AG04449 (cell line): ENCODE measurements at regions of chr16 and their contacts with region 1.

Region 1: DNA sequence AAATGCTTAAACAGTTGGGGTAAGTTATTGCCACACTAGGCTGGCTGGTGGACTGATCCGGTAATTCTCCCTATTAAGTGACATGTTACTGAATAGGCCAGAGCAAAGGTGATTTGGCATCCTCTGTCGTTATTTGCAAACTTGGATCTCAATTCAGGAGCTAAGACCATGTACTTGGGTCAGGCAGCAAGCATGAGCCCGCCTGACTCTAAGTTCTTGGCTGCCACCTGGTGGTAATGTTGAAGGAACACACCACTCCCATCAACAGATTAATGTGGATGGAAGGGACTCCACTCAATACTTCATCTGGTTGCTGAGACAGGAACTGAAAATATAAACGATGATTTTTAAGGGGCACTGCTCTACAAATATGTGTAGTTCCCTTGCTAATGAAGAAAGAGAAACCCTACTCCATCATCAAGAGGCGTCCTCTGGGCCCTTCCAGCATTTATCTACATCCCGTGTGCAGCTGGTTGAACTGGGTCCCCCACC is 70.8 kb downstream of the EMP2 start:
- DNase-seq: peak; percentile 42
- H3K4me3 ChIP-seq: no peak overlapping the region
- CTCF ChIP-seq: peak; percentile 70

Region 2: DNA sequence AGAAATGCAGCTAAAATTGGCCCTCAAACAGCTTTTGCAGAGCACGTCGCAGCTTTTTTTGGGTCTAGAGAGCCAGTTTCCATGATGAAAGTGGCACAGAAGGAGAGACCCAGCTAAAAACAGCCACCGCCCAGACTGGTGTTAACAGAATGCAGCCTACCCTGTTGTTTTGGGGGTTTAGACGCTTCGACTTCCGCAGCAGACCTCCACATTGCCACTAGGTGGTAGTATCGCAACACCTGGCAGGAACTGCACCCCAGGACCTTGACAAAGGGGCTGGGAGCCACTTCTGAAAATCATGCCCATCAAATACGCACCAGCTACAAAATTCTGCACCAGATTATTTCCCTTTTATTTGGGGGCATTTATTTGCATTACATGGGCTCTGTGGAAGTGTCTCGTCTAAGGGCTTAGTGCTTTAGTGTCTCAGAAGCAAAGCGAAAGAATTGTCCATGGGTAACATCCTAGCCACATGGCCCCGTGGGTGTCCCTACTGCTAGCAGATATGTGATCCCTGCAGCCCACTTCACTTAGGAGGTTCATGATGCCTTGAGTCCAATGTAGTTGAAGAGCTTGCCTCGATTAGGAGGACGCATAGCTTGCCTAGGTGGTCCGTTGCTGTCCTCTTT is 1251.0 kb before region 1 on chr16:
- CTCF ChIA-PET with region 1: interaction called, 13 read pairs
- POLR2A ChIA-PET with region 1: no interaction called
- DNase-seq: no peak
- H3K4me3 ChIP-seq: no peak overlapping the region
- CTCF ChIP-seq: peak; percentile 48

Region 3: DNA sequence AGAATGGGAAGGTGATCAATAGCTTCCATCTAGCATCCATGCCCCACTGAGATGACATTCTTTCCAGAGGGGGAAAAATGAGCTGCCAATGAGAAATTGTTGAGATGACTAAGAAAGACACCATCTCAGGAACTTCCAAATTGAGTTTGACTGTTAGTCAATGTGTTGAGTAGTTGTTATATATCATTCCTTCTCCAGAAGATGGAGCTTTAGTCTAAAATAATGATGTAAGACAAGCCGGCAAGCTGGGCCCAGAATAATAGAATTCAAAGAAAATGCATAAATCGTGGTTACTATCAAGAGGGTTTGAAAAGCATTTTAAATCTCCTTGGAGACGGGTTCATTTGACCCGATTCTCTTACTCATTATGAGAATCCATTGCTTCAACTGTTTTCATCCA is 194.8 kb before region 1 on chr16:
- CTCF ChIA-PET with region 1: interaction called, 21 read pairs
- POLR2A ChIA-PET with region 1: no interaction called
- DNase-seq: no peak
- H3K4me3 ChIP-seq: no peak overlapping the region
- CTCF ChIP-seq: no peak

Region 4: GRCh38 chr16:10541366-10541765 is 31.8 kb after region 1 on chr16:
- CTCF ChIA-PET with region 1: no interaction called
- POLR2A ChIA-PET with region 1: no interaction called
- DNase-seq: no peak
- H3K4me3 ChIP-seq: no peak overlapping the region
- CTCF ChIP-seq: no peak

Region 5: GRCh38 chr16:10731790-10732189 is 222.2 kb after region 1 on chr16:
- CTCF ChIA-PET with region 1: interaction called, 242 read pairs
- POLR2A ChIA-PET with region 1: no interaction called
- DNase-seq: no peak
- H3K4me3 ChIP-seq: no peak overlapping the region
- CTCF ChIP-seq: no peak

Region 6: DNA sequence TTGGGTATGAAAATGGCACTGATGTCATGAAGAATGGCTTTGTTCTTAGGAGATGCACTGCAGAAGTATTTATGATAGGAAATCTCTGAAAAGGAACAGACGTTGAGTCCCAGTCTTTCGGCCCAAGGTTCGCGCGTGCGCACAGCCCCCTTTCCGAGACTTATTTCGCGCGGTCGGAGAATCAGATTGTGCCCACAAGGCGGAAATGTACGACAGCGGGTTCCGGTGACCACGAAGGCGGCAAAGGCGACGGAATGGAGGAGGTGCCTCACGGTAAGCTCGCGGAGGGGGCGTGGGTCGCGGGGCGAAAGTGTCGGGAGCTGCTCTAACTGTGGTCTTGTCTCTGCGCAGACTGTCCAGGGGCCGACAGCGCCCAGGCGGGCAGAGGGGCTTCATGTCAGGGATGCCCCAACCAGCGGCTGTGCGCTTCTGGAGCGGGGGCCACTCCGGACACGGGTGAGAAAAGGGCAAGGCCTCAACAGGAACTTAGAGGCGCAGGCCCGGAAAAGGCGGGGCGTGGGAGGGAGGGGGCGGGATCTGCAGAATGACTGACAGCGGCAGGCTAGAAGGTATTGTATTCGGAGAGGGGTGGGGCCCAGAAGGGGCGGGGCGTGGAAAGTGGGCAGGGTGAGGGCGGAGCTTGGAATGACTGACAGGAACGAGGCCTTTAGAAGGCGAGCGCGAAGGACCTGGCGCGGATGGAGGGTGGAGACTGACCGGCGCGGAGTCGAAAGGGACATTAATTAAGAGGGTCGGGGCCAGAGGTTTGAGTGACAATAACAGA is 234.2 kb after region 1 on chr16 and contains the start of gene NUBP1:
- CTCF ChIA-PET with region 1: interaction called, 242 read pairs
- POLR2A ChIA-PET with region 1: interaction called, 3 read pairs
- DNase-seq: peak; percentile 89
- H3K4me3 ChIP-seq: peak within 1 kb of the TSS; percentile 82
- CTCF ChIP-seq: no peak